ENCODE measurements at regions of chr6 and their contacts with region 1.

Region 1: GRCh38 chr6:13548500-13549210 is 25.7 kb upstream of the SIRT5 start:
- DNase-seq: no peak
- ATAC-seq: no peak
- H3K4me3 Mint-ChIP-seq: no peak overlapping the region
- H3K27ac Mint-ChIP-seq: no peak overlapping the region
- H3K4me1 Mint-ChIP-seq: peaks cover 4% of the 10 kb centered on the region
- H3K27me3 Mint-ChIP-seq: no peaks in the 10 kb centered on the region
- CTCF ChIP-seq: no peak

Region 2: GRCh38 chr6:13561624-13562267 is 13.1 kb after region 1 on chr6:
- CTCF ChIA-PET with region 1: no interaction called
- POLR2A ChIA-PET with region 1: interaction called, 15 read pairs
- intact Hi-C with region 1: no loop called
- DNase-seq: no peak
- ATAC-seq: no peak
- H3K4me3 Mint-ChIP-seq: no peak overlapping the region
- H3K27ac Mint-ChIP-seq: no peak overlapping the region
- H3K4me1 Mint-ChIP-seq: no peaks in the 10 kb centered on the region
- H3K27me3 Mint-ChIP-seq: peaks cover 4% of the 10 kb centered on the region
- CTCF ChIP-seq: no peak

Region 3: GRCh38 chr6:14108571-14109410 is 560.1 kb after region 1 on chr6:
- CTCF ChIA-PET with region 1: no interaction called
- POLR2A ChIA-PET with region 1: no interaction called
- intact Hi-C with region 1: no loop called
- DNase-seq: peak; percentile 69
- ATAC-seq: peak; percentile 71
- H3K4me3 Mint-ChIP-seq: peak overlapping the region; percentile 79
- H3K27ac Mint-ChIP-seq: peak overlapping the region; percentile 97
- H3K4me1 Mint-ChIP-seq: peaks cover 67% of the 10 kb centered on the region
- H3K27me3 Mint-ChIP-seq: no peaks in the 10 kb centered on the region
- CTCF ChIP-seq: no peak

Measured in activated B cell treated with CpG ODN at 0.5 μM for 24 hours (primary cell).